Activated CD4-positive, alpha-beta T cell treated with anti-CD3 and anti-CD28 coated beads for 36 hours (primary cell): ENCODE measurements at regions of chr19 and their contacts with region 1.

Region 1: GRCh38 chr19:19224852-19225494 is 13.2 kb downstream of the NCAN start:
- DNase-seq: peak; percentile 87
- ATAC-seq: peak; percentile 90
- H3K4me3 Mint-ChIP-seq: peak overlapping the region; percentile 61
- H3K27ac Mint-ChIP-seq: no peak overlapping the region
- H3K4me1 Mint-ChIP-seq: no peaks in the 10 kb centered on the region
- H3K27me3 Mint-ChIP-seq: peaks cover 6% of the 10 kb centered on the region

Region 2: DNA sequence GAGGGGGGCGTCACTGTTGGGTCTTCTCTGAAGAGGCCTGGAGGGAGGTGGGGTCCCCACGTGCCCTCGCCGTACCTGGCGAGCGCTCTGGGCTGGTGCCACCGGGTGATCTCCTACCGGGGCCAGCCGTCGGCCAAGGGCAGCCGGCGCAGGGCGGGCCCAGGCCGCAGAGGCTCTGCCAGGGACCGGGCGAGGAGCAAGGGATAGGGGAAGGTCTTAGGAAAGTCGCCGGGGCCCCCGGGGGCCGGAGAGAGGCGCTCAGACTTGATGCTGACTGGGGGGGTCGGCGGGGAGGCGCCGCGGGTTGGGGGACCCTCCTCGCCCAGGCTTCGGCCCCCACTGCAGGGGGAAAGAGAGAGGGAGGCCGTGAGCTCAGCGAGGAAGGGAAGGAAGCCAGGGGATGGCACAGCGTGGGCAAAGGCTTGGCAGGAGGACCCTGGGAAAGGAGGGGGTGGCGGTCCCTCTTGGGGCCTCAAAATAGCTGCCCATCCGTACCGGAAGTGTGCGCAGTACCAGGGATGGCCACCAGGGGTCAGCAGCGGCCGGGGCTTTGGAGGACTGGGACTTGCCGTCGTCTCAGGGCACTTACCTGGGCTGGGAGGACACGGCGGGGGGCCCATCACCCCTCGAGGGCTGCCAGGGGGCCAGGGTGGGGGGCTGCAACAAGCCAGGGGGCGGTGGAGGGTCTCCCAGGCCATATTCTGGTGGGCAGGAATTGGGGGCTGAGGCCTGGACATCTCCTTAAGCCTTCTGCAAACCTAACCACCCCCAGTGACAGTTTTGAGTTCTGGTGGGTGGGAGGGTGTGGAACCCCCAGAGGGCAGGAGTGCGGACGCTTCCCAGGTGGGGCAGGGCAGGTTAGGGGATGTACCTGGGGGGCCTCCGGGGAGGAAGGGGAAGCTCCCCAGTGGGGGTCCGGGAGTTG is 79.0 kb before region 1 on chr19:
- CTCF ChIA-PET with region 1: interaction called, 11 read pairs
- POLR2A ChIA-PET with region 1: no interaction called
- intact Hi-C with region 1: loop called (anchors 1 kb)
- DNase-seq: peak; percentile 93
- ATAC-seq: peak; percentile 88
- H3K4me3 Mint-ChIP-seq: no peak overlapping the region
- H3K27ac Mint-ChIP-seq: no peak overlapping the region
- H3K4me1 Mint-ChIP-seq: no peaks in the 10 kb centered on the region
- H3K27me3 Mint-ChIP-seq: no peaks in the 10 kb centered on the region

Region 3: DNA sequence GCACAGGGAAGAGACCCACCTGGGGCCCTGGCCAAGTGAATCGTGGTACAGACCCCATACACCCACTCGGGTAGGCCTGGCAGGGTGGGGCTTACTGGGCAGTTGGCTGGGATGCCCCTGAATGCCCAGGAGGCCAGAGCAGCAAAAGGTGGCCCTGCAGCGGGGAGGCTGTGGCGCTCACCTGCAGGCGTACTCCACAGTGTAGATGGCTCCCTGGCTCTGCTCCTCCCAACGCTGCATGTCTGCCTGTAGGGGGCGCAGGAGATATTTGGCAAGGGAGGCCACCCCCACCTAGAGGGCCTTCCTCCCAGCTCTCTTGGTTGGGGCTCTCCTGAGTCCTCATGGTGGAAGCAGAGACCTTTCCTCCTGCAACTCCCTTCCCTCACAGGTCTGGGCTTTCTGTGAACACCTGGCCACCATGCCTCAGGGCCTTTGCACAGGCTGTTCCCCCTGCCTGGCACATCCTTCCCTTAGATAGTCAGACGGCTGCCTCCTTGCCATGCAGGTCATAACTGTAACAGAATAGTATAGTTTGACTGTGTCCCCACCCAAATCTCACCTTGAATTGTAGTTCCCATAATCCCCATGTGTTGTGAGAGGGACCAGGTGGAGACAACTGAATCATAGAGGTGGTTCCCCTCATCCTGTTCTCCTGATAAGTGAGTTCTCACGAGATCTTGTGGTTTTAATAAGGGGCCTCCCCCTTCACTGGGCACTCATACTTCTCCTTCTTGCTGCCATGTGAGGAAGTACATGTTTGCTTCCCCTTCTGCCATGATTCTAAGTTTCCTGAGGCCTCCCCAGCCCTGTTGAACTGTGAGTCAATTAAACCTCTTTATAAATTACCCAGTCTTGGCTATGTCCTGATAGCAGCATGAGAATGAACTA is 38.9 kb before region 1 on chr19:
- CTCF ChIA-PET with region 1: no interaction called
- POLR2A ChIA-PET with region 1: no interaction called
- intact Hi-C with region 1: loop called (anchors 1 kb)
- DNase-seq: peak; percentile 75
- ATAC-seq: peak; percentile 89
- H3K4me3 Mint-ChIP-seq: no peak overlapping the region
- H3K27ac Mint-ChIP-seq: peak overlapping the region; percentile 60
- H3K4me1 Mint-ChIP-seq: peaks cover 28% of the 10 kb centered on the region
- H3K27me3 Mint-ChIP-seq: no peaks in the 10 kb centered on the region

Region 4: DNA sequence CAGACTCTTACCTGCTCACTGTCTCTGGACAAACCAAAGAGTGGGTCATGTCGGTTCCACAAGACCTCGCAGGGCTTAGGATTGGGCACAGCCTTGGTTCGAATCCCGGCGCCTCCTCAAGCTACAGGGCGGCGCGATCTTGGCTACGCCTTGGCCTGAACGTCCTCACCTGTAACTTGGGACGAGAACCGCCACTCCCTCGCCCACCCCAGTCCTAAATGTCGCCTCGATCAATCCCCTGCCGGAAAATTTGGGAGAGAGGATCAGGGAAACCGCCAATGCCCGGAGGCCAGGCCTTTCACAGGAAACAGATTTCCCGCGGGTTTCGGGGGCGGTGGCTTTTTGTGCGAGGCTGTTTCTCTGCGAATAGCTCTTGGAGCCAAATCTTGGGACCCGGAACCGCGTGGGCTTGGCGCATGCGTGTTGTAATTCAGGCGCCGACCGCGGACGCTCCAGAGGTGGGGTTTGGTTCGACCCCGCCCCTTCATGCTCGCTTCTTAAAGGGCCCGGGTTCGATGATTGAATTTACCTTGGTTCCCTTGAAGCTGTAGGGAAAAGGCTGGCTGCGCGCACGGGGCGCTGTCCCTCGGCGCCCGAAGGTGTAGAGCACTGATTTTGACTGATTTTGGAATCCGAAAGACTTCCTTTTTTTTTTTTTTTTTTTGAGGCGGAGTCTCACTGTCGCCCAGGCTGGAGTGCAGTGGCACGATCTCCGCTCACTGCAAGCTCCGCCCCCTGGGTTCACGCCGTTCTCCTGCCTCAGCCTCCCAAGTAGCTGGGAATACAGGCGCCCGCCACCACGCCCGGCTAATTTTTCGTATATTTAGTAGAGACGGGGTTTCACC is 21.7 kb before region 1 on chr19 and contains the start of gene NR2C2AP:
- CTCF ChIA-PET with region 1: interaction called, 10 read pairs
- POLR2A ChIA-PET with region 1: interaction called, 4 read pairs
- intact Hi-C with region 1: loop called in 1 of 2 experiments (anchors 1 kb)
- DNase-seq: peak; percentile 96
- ATAC-seq: peak; percentile 95
- H3K4me3 Mint-ChIP-seq: peak within 1 kb of the TSS; percentile 90
- H3K27ac Mint-ChIP-seq: peak within 1 kb of the TSS; percentile 84
- H3K4me1 Mint-ChIP-seq: peaks cover 30% of the 10 kb centered on the region
- H3K27me3 Mint-ChIP-seq: no peaks in the 10 kb centered on the region
- total RNA-seq, gene NR2C2AP: 34.7 to 46.6 TPM